Activated CD4-positive, alpha-beta memory T cell treated with anti-CD3 and anti-CD28 coated beads for 36 hours (primary cell): ENCODE measurements at regions of chr7 and their contacts with region 1.

Region 1: GRCh38 chr7:35906191-35906908 is 105.5 kb downstream of the SEPTIN7 start:
- DNase-seq: peak; percentile 70
- H3K4me3 Mint-ChIP-seq: no peak overlapping the region
- H3K27ac Mint-ChIP-seq: no peak overlapping the region
- H3K4me1 Mint-ChIP-seq: no peaks in the 10 kb centered on the region
- H3K27me3 Mint-ChIP-seq: no peaks in the 10 kb centered on the region

Region 2: GRCh38 chr7:35424869-35425495 is 481.4 kb before region 1 on chr7:
- CTCF ChIA-PET with region 1: interaction called, 7 read pairs
- POLR2A ChIA-PET with region 1: no interaction called
- intact Hi-C with region 1: loop called (anchors 10 kb)
- DNase-seq: peak; percentile 64
- H3K4me3 Mint-ChIP-seq: no peak overlapping the region
- H3K27ac Mint-ChIP-seq: no peak overlapping the region
- H3K4me1 Mint-ChIP-seq: no peaks in the 10 kb centered on the region
- H3K27me3 Mint-ChIP-seq: peaks cover 7% of the 10 kb centered on the region

Region 3: DNA sequence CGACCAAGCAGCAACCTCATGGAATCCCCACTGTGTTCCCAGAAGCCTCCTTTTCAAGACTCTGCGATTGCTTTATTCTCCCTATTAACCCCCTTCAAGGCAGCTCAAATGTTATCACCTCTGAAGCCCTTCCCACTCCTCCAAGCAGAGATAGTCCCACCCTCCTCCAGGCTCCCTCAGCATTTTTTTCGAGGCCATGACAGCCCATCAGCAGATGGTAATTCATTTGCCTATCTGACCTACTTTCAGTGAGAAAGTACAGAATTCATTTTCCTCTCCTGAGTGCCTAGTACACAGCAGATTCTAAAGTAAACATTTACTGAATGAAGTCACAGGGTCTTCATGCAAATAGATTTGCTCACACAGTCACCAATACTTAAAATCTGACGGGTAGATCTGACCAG is 259.2 kb before region 1 on chr7:
- CTCF ChIA-PET with region 1: no interaction called
- POLR2A ChIA-PET with region 1: no interaction called
- intact Hi-C with region 1: loop called (anchors 5 kb)
- DNase-seq: no peak
- H3K4me3 Mint-ChIP-seq: no peak overlapping the region
- H3K27ac Mint-ChIP-seq: peak overlapping the region; percentile 10
- H3K4me1 Mint-ChIP-seq: peaks cover 58% of the 10 kb centered on the region
- H3K27me3 Mint-ChIP-seq: no peaks in the 10 kb centered on the region

Region 4: DNA sequence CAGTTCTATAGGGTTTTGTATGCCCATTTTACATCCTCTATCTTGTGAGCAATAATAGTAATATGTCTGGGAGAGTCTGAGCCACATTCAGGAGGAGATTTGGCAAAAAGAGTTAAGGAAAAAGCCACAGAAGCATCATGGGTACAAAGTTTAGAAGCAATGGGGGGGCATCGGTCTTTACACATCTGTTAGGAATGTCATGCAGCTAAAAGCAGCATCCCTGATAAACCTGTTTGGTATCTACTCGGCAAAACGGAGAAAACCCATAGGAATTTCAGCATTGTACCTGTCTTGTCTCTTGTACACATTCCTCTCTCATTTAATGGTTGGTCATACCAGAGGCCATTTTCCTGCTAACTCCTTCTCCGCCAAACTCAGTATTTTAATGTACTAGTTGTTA is 198.9 kb before region 1 on chr7:
- CTCF ChIA-PET with region 1: interaction called, 11 read pairs
- POLR2A ChIA-PET with region 1: no interaction called
- intact Hi-C with region 1: loop called (anchors 1 kb)
- DNase-seq: no peak
- H3K4me3 Mint-ChIP-seq: no peak overlapping the region
- H3K27ac Mint-ChIP-seq: no peak overlapping the region
- H3K4me1 Mint-ChIP-seq: peaks cover 8% of the 10 kb centered on the region
- H3K27me3 Mint-ChIP-seq: no peaks in the 10 kb centered on the region

Region 5: GRCh38 chr7:35729061-35729783 is 177.1 kb before region 1 on chr7:
- CTCF ChIA-PET with region 1: interaction called, 10 read pairs
- POLR2A ChIA-PET with region 1: no interaction called
- intact Hi-C with region 1: no loop called
- DNase-seq: peak; percentile 68
- H3K4me3 Mint-ChIP-seq: no peak overlapping the region
- H3K27ac Mint-ChIP-seq: peak overlapping the region; percentile 15
- H3K4me1 Mint-ChIP-seq: peaks cover 61% of the 10 kb centered on the region
- H3K27me3 Mint-ChIP-seq: peaks cover 3% of the 10 kb centered on the region

Region 6: DNA sequence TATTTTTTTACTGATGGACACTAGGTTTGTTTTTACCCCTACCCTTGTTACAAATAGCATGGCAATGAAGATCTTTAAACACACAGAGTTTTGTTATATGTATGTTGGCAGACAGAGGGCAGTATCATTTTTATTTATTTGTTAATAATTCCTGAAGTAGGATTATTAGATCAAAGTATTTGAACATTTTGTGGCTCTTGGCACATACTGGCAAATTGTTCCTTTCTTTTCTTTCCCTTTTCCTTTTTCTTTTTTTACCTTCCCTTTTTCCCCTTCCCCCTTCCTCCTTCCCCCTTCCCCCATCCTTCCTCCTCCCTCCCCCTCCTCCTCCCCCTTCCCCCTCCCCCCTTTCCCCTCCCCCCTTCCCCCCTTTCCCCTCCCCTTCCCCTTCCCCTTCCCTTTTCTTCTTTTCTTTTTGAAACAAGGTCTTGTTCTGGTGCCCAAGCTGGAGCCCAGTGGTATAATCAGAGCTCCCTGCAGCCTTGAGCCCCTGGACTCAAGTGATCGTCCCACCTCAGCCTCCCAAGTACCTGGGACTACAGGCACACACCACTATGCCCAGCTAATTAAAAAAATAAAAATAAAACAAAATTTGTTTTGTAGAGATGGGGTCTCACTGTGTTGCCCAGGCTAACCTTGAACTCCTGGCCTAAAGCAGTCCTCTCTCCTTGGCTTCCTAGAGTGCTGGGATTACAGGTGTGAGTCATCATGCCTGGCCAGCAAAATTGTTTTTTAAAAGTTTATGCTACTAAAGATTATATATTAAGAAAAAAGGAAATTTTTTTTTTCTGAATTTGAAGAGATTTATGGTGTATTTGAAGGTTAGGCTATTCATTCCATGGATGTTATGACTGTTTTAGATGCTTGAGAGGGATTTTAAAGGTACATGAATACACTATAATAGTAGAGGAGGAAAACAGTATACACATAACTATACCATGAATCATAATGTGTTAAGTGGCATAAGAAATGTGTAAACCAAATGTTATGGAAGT is 66.2 kb before region 1 on chr7:
- CTCF ChIA-PET with region 1: no interaction called
- POLR2A ChIA-PET with region 1: no interaction called
- intact Hi-C with region 1: no loop called
- DNase-seq: no peak
- H3K4me3 Mint-ChIP-seq: no peak overlapping the region
- H3K27ac Mint-ChIP-seq: no peak overlapping the region
- H3K4me1 Mint-ChIP-seq: peaks cover 32% of the 10 kb centered on the region
- H3K27me3 Mint-ChIP-seq: no peaks in the 10 kb centered on the region